H1 (cell line): ENCODE measurements at regions of chr6 and their contacts with region 1.

Region 1: GRCh38 chr6:99746261-99746895 is 139.7 kb downstream of the PRDM13 start:
- DNase-seq: peak; percentile 23 to 66
- H3K4me3 ChIP-seq: no peak overlapping the region
- H3K27ac ChIP-seq: no peak overlapping the region
- H3K4me1 ChIP-seq: no peaks in the 10 kb centered on the region
- H3K27me3 ChIP-seq: no peaks in the 10 kb centered on the region
- CTCF ChIP-seq: peak in 2 of 3 experiments; percentile 64 to 77; a peak in 3 of 4 replicates
- EP300 ChIP-seq: no peak
- POLR2A ChIP-seq: no peak
- RAD21 ChIP-seq: peak; percentile 78 to 82

Region 2: DNA sequence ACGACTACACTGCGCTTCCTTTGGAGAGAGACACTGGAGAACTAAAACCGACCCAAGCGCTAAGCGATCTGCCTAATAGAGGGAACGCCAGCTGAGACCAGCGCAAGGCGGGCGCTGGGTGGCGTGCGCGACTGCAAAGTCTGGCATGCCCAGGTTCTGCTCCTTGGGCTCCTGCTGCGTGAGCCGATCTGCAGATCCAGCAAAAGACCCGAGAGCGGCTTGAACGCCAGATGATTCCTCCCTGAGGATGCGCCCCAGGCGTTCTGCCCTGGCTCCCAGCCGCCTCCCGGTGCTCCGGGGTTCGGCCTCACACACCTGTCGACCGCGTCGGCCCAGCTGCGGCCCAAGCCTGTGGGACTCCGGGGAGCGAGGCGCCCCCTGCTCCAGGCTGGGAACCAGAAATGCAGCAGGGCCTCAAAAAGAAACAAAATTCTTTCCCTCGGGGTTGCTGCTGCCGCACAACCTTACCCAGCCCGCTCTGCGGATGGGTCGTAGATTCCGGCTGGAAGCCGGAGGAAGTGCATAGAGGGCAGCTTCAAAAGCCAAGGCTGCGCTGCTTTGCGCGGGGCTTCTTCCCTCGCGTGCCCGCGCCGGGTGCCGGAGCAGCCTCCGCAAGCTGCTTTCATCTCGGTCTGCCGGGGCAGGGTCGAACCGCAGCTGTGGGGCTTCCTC is 157.6 kb before region 1 on chr6:
- CTCF ChIA-PET with region 1: interaction called, 22 read pairs
- POLR2A ChIA-PET with region 1: interaction called, 3 read pairs
- DNase-seq: peak; percentile 81 to 84
- H3K4me3 ChIP-seq: peak overlapping the region; percentile 25 to 61 (median 38)
- H3K27ac ChIP-seq: no peak overlapping the region
- H3K4me1 ChIP-seq: peaks cover 0 to 6% (median 2%) of the 10 kb centered on the region in 4 experiments; a peak in 4 of 7 replicates
- H3K27me3 ChIP-seq: peaks cover 56 to 90% (median 76%) of the 10 kb centered on the region in 4 experiments
- CTCF ChIP-seq: peak; percentile 70 to 78 (median 76)
- EP300 ChIP-seq: no peak
- POLR2A ChIP-seq: no peak
- RAD21 ChIP-seq: peak; percentile 81 to 85

Region 3: DNA sequence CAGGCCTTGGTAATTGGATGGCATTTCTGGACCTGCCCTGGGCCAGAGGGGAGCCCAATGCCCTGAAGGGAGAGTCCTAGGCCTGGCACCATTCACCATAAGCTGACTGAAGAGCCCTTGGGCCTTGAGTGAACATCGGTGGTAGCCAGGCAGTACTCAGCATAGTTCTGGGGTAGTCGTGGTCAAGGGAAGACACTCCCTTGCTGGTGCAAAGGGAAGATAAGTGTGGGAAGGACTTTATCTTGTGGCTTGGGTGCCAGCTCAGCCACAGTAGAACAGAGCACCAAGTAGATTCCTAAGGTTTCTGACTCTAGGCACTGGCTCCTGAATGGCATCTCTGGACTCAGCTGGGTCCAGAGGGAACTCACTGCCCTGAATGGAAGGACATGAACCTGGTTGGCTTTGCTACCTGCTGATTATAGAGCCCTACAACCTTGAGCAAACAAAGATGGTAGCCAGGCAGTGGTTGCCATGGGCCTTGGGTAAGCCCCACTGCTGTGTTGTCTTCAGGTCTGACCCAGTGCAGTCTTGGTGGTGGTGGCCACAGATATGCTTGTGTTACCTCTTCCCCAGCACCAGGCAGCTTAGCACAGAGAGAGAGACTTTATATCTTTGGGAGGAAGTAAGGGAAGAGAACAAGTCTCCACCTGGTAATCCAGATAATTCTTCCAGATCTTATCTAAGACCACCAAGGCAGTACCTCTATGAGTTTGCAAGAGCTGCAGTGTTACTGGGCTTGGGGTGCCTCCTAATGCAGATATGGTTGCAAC is 56.3 kb before region 1 on chr6:
- CTCF ChIA-PET with region 1: interaction called, 10 read pairs
- POLR2A ChIA-PET with region 1: no interaction called
- DNase-seq: no peak
- H3K4me3 ChIP-seq: no peak overlapping the region
- H3K27ac ChIP-seq: no peak overlapping the region
- H3K4me1 ChIP-seq: no peaks in the 10 kb centered on the region
- H3K27me3 ChIP-seq: no peaks in the 10 kb centered on the region
- CTCF ChIP-seq: no peak
- EP300 ChIP-seq: no peak
- POLR2A ChIP-seq: no peak
- RAD21 ChIP-seq: no peak

Region 4: DNA sequence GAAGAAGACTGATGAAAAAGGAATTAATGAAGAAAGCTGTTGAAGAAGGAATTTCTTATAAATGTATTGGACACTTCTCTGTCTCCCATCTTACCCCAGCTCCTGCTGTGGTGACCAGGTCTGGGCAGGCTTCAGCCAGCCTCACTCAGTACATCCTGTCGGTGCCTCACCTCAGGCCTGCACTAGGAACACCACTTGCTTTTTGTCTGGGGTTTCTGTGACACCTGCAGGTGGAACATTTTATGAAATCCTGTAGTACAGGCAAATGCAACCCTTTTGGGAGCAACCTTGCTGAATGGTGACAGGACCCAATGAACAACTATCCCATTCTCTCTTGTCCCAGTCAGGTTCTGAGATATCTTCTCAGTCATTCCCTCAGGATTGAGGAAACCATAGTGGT is 10.1 kb before region 1 on chr6:
- CTCF ChIA-PET with region 1: interaction called, 33 read pairs
- POLR2A ChIA-PET with region 1: no interaction called
- DNase-seq: no peak
- H3K4me3 ChIP-seq: no peak overlapping the region
- H3K27ac ChIP-seq: no peak overlapping the region
- H3K4me1 ChIP-seq: no peaks in the 10 kb centered on the region
- H3K27me3 ChIP-seq: peaks cover 0 to 1% (median 0%) of the 10 kb centered on the region in 4 experiments; a peak in 1 of 7 replicates
- CTCF ChIP-seq: peak in 2 of 3 experiments; percentile 16 to 18; a peak in 2 of 4 replicates
- EP300 ChIP-seq: no peak
- POLR2A ChIP-seq: no peak
- RAD21 ChIP-seq: peak; percentile 54 to 58

Region 5: GRCh38 chr6:99761711-99762110 is 15.3 kb after region 1 on chr6:
- CTCF ChIA-PET with region 1: interaction called, 11 read pairs
- POLR2A ChIA-PET with region 1: no interaction called
- DNase-seq: no peak
- H3K4me3 ChIP-seq: no peak overlapping the region
- H3K27ac ChIP-seq: no peak overlapping the region
- H3K4me1 ChIP-seq: no peaks in the 10 kb centered on the region
- H3K27me3 ChIP-seq: no peaks in the 10 kb centered on the region
- CTCF ChIP-seq: no peak
- EP300 ChIP-seq: no peak
- POLR2A ChIP-seq: no peak
- RAD21 ChIP-seq: no peak

Region 6: GRCh38 chr6:99768166-99768565 is 21.8 kb after region 1 on chr6:
- CTCF ChIA-PET with region 1: interaction called, 10 read pairs
- POLR2A ChIA-PET with region 1: no interaction called
- DNase-seq: no peak
- H3K4me3 ChIP-seq: no peak overlapping the region
- H3K27ac ChIP-seq: no peak overlapping the region
- H3K4me1 ChIP-seq: no peaks in the 10 kb centered on the region
- H3K27me3 ChIP-seq: no peaks in the 10 kb centered on the region
- CTCF ChIP-seq: no peak
- EP300 ChIP-seq: no peak
- POLR2A ChIP-seq: no peak
- RAD21 ChIP-seq: no peak